Activated CD8-positive, alpha-beta T cell treated with anti-CD3 and anti-CD28 coated beads, Interleukin-2, amount 10 ng/mL, durations not matched to agents 7 days and 5 days (primary cell): ENCODE measurements at regions of chr1 and their contacts with region 1.

Region 1: DNA sequence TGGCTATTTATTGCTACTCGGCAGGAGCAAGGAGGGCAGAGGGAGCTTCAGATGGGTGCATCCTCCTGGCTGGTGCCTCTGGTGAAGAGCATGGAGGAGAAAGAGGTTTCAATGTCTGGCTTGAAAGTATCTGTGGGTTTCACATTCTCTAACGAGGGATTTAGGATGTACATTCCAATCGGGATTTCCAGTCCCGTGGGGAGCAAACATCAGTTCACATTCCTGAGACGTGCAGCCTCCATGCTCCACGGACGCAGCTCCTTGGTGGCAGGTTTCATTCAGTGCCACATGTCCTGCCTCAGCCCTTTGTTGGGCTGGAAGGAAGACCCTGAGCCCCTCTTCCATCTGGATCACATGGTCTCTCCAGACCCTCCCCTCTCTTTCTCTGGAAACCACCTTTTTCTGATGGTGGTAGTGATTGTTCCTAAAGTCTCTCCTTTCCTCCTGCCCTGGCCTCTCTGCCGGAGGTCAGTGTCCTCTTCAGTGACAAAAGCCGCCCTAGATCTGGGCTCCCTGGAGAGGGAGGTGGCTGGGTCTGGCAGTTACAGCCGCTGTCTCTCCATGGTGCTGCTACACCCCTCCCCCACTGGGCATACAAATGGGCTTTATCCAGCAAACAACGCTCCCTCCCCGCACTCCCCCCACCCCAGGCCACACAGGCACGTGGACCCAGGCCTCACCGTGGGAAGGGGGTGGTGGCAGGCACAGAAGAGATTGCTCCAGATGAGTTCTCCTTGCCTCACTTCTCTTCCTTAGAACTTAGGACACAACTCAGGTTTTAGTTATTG is 826 bp upstream of the CA14 start:
- DNase-seq: no peak
- ATAC-seq: no peak
- H3K4me3 Mint-ChIP-seq: no peak overlapping the region
- H3K27ac Mint-ChIP-seq: no peak overlapping the region
- H3K4me1 Mint-ChIP-seq: peaks cover 24% of the 10 kb centered on the region
- H3K27me3 Mint-ChIP-seq: peaks cover 48% of the 10 kb centered on the region

Region 2: GRCh38 chr1:150235852-150236613 is 20.7 kb before region 1 on chr1 and contains the start of gene ANP32E:
- CTCF ChIA-PET with region 1: interaction called, 18 read pairs
- POLR2A ChIA-PET with region 1: interaction called, 3 read pairs
- DNase-seq: peak; percentile 97
- ATAC-seq: peak; percentile 89
- H3K4me3 Mint-ChIP-seq: no peak within 1 kb of the TSS
- H3K27ac Mint-ChIP-seq: no peak within 1 kb of the TSS
- H3K4me1 Mint-ChIP-seq: peaks cover 21% of the 10 kb centered on the region
- H3K27me3 Mint-ChIP-seq: peaks cover 7% of the 10 kb centered on the region
- total RNA-seq, gene ANP32E: 155 to 161 TPM

Region 3: DNA sequence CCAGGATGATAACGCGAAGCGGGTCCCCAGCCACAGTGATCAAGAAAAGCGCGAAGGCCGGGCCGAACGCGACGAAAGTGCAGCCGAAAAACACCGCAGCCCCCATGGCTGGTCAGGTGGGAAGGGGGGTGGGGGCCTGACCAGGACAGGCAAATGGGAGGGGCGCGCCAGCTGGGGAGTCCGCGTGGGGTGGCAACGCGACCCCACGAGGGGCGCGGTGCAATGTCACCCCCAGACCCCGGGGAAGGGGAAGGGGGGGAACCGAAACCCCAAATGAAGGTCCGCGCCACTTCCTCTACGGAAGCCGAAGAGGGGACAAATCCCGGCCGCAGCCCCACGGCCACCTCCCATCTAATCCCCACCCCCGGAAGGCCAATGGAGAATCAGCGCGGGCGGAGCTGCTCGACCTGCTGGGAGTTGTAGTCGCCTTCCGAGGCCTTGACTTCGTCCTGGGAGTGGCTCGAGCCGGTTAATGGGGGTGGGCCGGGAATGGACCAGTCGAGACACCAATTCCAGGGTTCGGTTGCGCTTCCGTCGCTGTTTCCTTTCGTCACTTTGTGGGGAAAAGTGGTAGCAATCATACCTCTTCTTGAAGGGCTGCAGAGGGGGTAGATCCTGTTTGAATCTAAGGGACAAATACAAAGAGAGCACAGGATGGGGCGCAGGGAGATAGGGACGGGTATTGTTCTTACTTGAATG is 12.1 kb after region 1 on chr1 and contains the start of gene APH1A:
- CTCF ChIA-PET with region 1: interaction called, 34 read pairs
- POLR2A ChIA-PET with region 1: interaction called, 7 read pairs
- DNase-seq: peak; percentile 97
- ATAC-seq: peak; percentile 96
- H3K4me3 Mint-ChIP-seq: peak within 1 kb of the TSS; percentile 99
- H3K27ac Mint-ChIP-seq: peak within 1 kb of the TSS; percentile 98
- H3K4me1 Mint-ChIP-seq: peaks cover 40% of the 10 kb centered on the region
- H3K27me3 Mint-ChIP-seq: no peaks in the 10 kb centered on the region
- total RNA-seq, gene APH1A: 128 to 132 TPM

Region 4: GRCh38 chr1:150288822-150289221 is 32.1 kb after region 1 on chr1:
- CTCF ChIA-PET with region 1: interaction called, 24 read pairs
- POLR2A ChIA-PET with region 1: no interaction called
- DNase-seq: no peak
- ATAC-seq: no peak
- H3K4me3 Mint-ChIP-seq: no peak overlapping the region
- H3K27ac Mint-ChIP-seq: no peak overlapping the region
- H3K4me1 Mint-ChIP-seq: peaks cover 9% of the 10 kb centered on the region
- H3K27me3 Mint-ChIP-seq: no peaks in the 10 kb centered on the region

Region 5: DNA sequence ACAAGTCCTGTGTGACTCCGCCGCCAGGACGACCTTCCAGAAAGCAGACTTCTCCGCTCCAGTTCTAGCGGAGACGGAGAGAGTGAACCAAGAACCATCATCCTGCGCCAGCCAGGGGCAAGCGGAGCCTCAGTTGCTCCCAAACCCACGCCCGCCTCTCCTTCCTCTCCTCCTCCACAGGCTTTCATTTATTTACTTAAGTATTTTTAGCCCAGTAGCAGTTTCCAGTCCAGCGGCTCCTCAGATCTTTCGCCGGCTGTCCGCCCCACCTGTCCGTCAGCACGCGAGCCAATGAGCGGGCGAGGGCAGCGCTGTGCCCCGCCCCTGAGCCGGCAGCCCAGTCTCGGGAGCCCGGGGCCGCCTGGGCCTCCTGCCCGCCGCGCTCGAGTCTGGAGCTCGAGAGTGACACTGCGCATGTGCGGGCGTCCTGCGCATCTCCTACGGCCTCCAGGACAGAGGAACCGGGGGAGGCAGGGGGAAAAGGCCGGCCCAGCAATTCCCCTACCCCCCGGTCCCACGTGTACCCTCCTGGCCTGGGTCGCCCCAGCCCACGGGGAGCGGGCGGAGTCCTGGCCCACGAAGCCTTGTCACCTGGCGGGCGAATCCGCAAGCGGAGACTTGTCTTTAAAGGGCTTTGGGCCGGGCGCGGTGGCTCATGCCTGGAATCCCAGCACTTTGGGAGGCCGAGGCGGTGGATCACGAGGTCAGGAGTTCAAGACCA is 258.7 kb after region 1 on chr1 and contains the start of gene FALEC:
- CTCF ChIA-PET with region 1: interaction called, 19 read pairs
- POLR2A ChIA-PET with region 1: no interaction called
- DNase-seq: peak; percentile 92
- ATAC-seq: peak; percentile 100
- H3K4me3 Mint-ChIP-seq: peak within 1 kb of the TSS; percentile 90
- H3K27ac Mint-ChIP-seq: peak within 1 kb of the TSS; percentile 81
- H3K4me1 Mint-ChIP-seq: peaks cover 18% of the 10 kb centered on the region
- H3K27me3 Mint-ChIP-seq: no peaks in the 10 kb centered on the region
- total RNA-seq, gene FALEC: not detected